Cardiac septum (tissue), 1 donor: ENCODE measurements at regions of chr21 and their contacts with region 1.

Region 1: GRCh38 chr21:39715804-39716397 is 29.1 kb upstream of the IGSF5 start:
- DNase-seq: no peak

Region 2: DNA sequence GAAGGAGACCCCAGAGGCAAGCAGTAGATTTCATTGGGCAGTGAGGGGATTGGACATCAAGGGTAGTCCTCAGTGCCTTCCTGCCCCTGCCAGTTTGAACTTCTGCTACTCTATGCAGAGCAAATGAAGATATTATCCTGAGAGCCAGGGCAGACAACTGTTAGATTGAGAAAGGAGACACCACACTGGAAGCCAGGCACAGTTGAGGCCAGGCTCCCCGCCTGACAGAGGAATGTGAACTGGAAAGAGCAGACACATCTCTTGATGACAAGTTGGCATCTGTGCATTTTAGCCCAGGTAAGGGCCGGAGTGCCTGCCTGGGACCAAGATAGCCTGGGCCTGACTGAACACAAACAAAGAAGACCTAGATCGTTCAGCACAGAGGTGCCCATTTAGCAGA is 248.2 kb before region 1 on chr21:
- intact Hi-C with region 1: no loop called
- DNase-seq: no peak

Region 3: GRCh38 chr21:39518138-39518846 is 197.6 kb before region 1 on chr21:
- intact Hi-C with region 1: loop called (anchors 1 kb)
- DNase-seq: no peak